MCF 10A (cell line): ENCODE measurements at regions of chr14 and their contacts with region 1.

Region 1: DNA sequence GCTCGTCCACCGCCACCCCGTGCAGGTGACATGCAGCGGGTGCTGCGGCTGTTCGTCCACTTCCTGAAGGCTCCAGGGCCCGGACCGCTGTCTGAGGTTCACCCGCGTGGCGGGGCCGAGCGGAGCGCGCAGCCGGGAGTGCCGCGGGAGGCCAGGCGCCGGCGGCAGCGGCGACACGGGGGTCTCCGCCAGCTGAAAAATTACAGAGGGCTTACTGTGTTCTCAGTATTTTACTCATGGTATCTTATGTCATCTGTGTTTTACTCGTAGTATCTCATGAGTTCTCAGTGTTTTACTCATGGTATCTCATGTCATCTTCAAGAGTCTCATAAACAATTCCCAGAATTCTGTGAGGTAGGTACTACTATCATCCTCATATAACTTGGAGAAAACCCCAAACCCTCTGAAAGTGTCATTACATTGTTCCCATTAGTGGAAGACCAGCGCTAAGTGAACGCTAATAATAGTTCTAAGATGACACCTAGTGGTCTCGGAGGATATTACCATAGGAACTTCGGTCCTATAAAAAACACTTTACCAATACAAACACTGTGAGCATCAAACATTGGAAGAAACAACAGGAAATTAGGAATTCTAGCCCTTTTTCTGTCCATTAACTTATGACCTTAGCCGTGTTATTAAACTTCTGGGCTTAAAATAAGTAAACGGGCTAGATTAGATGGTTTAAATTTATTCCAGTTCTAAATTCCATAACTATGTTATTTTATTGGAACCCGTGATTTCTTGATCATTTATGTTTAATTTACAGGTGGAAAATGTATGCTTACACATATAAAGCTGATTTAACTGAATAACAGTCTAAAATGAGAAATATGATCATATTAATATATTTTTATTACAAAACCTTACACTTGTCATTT is 32.4 kb downstream of the AK7 start:
- DNase-seq: peak; percentile 74
- H3K4me3 Mint-ChIP-seq: peak overlapping the region; percentile 64
- H3K27ac Mint-ChIP-seq: no peak overlapping the region
- H3K4me1 Mint-ChIP-seq: no peaks in the 10 kb centered on the region
- H3K27me3 Mint-ChIP-seq: no peaks in the 10 kb centered on the region
- CTCF ChIP-seq: peak; percentile 66

Region 2: GRCh38 chr14:95876761-95877538 is 547.4 kb before region 1 on chr14 and contains the start of gene TUNAR:
- CTCF ChIA-PET with region 1: no interaction called
- POLR2A ChIA-PET with region 1: no interaction called
- intact Hi-C with region 1: no loop called
- DNase-seq: no peak
- H3K4me3 Mint-ChIP-seq: no peak within 1 kb of the TSS
- H3K27ac Mint-ChIP-seq: no peak within 1 kb of the TSS
- H3K4me1 Mint-ChIP-seq: no peaks in the 10 kb centered on the region
- H3K27me3 Mint-ChIP-seq: peaks cover 84% of the 10 kb centered on the region
- CTCF ChIP-seq: no peak
- total RNA-seq, gene TUNAR: not detected in 2 replicates

Region 3: GRCh38 chr14:96281486-96281885 is 142.9 kb before region 1 on chr14:
- CTCF ChIA-PET with region 1: interaction called, 3 read pairs
- POLR2A ChIA-PET with region 1: no interaction called
- intact Hi-C with region 1: loop called (anchors 1 kb)
- DNase-seq: no peak
- H3K4me3 Mint-ChIP-seq: no peak overlapping the region
- H3K27ac Mint-ChIP-seq: no peak overlapping the region
- H3K4me1 Mint-ChIP-seq: no peaks in the 10 kb centered on the region
- H3K27me3 Mint-ChIP-seq: no peaks in the 10 kb centered on the region
- CTCF ChIP-seq: no peak

Region 4: GRCh38 chr14:96297000-96297399 is 127.3 kb before region 1 on chr14:
- CTCF ChIA-PET with region 1: interaction called, 25 read pairs
- POLR2A ChIA-PET with region 1: no interaction called
- intact Hi-C with region 1: loop called (anchors 1 kb)
- DNase-seq: peak; percentile 36
- H3K4me3 Mint-ChIP-seq: no peak overlapping the region
- H3K27ac Mint-ChIP-seq: no peak overlapping the region
- H3K4me1 Mint-ChIP-seq: no peaks in the 10 kb centered on the region
- H3K27me3 Mint-ChIP-seq: no peaks in the 10 kb centered on the region
- CTCF ChIP-seq: peak; percentile 45

Region 5: GRCh38 chr14:96362965-96363756 is 61.2 kb before region 1 on chr14 and contains the starts of genes ATG2B and GSKIP:
- CTCF ChIA-PET with region 1: no interaction called
- POLR2A ChIA-PET with region 1: no interaction called
- intact Hi-C with region 1: loop called (anchors 1 kb)
- DNase-seq: peak; percentile 89
- H3K4me3 Mint-ChIP-seq: peak within 1 kb of the TSS; percentile 95
- H3K27ac Mint-ChIP-seq: peak within 1 kb of the TSS; percentile 69
- H3K4me1 Mint-ChIP-seq: peaks cover 28% of the 10 kb centered on the region
- H3K27me3 Mint-ChIP-seq: no peaks in the 10 kb centered on the region
- CTCF ChIP-seq: no peak
- total RNA-seq, gene ATG2B: 20.5 and 22.2 TPM in 2 replicates
- total RNA-seq, gene GSKIP: 19.8 and 22.5 TPM in 2 replicates

Region 6: DNA sequence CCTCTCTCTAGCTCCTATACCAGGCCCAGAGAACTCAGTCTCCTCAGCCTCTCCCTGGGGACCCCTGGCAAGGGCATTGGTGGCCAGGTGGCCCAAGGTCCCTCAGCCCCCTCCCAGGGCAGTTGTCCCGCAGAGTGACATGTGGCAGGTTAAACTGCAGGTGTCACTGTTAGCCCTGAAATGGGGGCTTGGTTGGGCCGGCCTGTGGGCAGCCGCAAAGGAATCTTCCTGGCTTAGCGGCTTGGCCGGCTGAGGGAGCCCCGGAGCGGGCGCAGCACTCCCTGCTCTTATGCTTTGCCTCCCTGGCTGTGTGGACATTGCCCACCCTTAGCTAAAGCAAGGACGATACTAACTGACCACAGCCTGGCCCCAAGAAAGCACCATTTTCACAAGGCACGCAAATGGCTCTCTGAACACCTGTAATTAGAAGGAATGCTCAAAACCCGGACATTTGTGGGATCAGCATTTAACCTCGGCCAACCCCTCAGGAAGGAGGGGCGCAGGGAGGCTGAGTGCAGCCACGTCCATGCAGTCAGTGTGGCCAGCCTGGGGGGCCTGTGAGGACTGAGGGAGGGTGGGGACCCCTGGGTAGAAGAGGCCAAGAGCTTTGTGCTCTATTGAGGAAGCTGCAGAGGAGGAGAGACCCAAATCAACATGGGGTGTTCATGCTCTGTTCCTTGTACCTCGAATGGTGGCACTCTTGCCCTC is 160.0 kb after region 1 on chr14:
- CTCF ChIA-PET with region 1: no interaction called
- POLR2A ChIA-PET with region 1: no interaction called
- intact Hi-C with region 1: no loop called
- DNase-seq: peak; percentile 61
- H3K4me3 Mint-ChIP-seq: no peak overlapping the region
- H3K27ac Mint-ChIP-seq: no peak overlapping the region
- H3K4me1 Mint-ChIP-seq: no peaks in the 10 kb centered on the region
- H3K27me3 Mint-ChIP-seq: no peaks in the 10 kb centered on the region
- CTCF ChIP-seq: peak; percentile 44